ENCODE measurements at regions of chr11 and their contacts with region 1.

Region 1: DNA sequence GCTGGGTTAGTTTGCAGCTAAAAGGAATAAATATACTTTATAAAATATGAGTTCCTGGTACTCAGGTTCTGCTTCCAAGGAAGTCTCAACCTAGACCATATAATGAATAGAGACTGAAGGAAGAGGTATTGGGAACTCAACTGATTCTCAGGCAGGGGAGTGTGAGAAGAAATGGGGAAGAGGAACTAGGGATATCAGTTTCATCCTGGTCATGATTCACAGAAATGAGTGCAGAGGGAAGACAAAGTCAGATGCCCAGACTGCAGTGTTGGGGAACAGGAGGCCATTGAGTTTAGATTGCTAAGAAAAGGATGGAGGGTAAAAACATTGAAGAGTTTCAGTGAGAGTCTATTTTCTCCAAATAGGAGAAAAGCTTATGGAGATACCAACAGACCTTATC is 28.8 kb downstream of the PLAAT5 start:
- DNase-seq: no peak
- ATAC-seq: no peak
- H3K4me3 ChIP-seq: no peak overlapping the region
- H3K27ac ChIP-seq: no peak overlapping the region
- H3K4me1 ChIP-seq: no peaks in the 10 kb centered on the region
- H3K27me3 ChIP-seq: peaks cover 0 to 33% (median 11%) of the 10 kb centered on the region in 7 donors
- CTCF ChIP-seq: no peak

Region 2: GRCh38 chr11:63369165-63369970 is 92.8 kb before region 1 on chr11 and contains the start of gene SLC22A9:
- intact Hi-C with region 1: no loop called
- DNase-seq: no peak
- ATAC-seq: no peak
- H3K4me3 ChIP-seq: no peak within 1 kb of the TSS
- H3K27ac ChIP-seq: no peak within 1 kb of the TSS
- H3K4me1 ChIP-seq: no peaks in the 10 kb centered on the region
- H3K27me3 ChIP-seq: peaks cover 0 to 37% (median 10%) of the 10 kb centered on the region in 7 donors
- CTCF ChIP-seq: no peak
- total RNA-seq, gene SLC22A9: not detected

Region 3: DNA sequence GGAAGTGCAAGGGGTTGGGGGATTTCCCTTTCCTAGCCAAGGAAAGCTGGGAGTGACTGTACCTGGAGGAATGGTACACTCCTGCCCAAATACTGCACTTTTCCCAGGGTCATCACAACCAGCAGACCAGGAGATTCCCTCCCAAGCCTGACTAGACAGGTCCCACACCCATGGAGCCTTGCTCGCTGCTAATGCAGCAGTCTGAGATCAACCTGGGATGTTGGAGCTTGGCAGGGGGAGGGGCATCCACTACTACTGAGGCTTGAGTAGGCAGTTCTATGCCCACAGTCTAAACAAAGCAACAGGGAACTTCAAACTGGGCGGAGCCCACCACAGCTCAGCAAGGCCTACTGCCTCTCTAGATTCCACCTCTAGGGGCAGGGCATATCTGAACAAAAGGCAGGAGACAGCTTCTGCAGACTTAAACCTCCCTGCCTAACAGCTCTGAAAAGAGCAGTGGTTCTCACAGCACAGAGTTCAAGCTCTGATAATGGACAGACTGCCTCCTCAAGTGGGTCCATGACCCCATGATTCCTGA is 34.1 kb before region 1 on chr11:
- intact Hi-C with region 1: no loop called
- DNase-seq: no peak
- ATAC-seq: no peak
- H3K4me3 ChIP-seq: no peak overlapping the region
- H3K27ac ChIP-seq: no peak overlapping the region
- H3K4me1 ChIP-seq: no peaks in the 10 kb centered on the region
- H3K27me3 ChIP-seq: peaks cover 0 to 36% (median 4%) of the 10 kb centered on the region in 7 donors
- CTCF ChIP-seq: no peak

Region 4: DNA sequence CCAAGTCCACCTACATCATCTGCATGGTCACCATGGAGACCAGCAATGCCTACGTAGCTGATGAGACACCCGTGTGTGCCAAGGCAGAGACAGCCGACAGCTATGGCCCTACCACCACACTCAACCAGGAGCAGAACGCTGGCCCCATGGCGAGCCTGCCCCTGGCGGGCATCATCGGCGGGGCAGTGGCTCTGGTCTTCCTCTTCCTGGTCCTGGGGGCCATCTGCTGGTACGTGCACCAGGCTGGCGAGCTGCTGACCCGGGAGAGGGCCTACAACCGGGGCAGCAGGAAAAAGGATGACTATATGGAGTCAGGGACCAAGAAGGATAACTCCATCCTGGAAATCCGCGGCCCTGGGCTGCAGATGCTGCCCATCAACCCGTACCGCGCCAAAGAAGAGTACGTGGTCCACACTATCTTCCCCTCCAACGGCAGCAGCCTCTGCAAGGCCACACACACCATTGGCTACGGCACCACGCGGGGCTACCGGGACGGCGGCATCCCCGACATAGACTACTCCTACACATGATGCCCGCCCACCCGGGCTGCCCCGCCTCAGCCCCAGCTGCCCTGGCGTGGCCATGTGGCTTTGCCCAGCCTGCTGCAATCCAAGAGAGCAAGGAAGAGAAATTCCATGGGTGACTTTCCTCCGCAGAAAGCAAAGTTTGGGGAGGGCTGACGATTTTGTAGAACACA is 655.8 kb after region 1 on chr11:
- intact Hi-C with region 1: loop called in 1 of 10 experiments (anchors 10 kb)
- DNase-seq: no peak
- ATAC-seq: no peak
- H3K4me3 ChIP-seq: no peak overlapping the region
- H3K27ac ChIP-seq: no peak overlapping the region
- H3K4me1 ChIP-seq: peaks cover 0 to 21% (median 6%) of the 10 kb centered on the region in 9 donors
- H3K27me3 ChIP-seq: no peaks in the 10 kb centered on the region
- CTCF ChIP-seq: no peak

Measured in heart right ventricle (tissue), 16 donors.